Left lung (tissue), 14 donors: ENCODE measurements at regions of chr21 and their contacts with region 1.

Region 1: GRCh38 chr21:33127154-33127893 is 57.4 kb downstream of the OLIG1 start:
- DNase-seq: peak; percentile 61 to 84 (median 74)
- ATAC-seq: peak; percentile 98
- H3K4me3 ChIP-seq: no peak overlapping the region
- H3K27ac ChIP-seq: no peak overlapping the region
- H3K4me1 ChIP-seq: peaks cover 0 to 8% of the 10 kb centered on the region in 2 donors
- H3K27me3 ChIP-seq: peaks cover 0 to 58% of the 10 kb centered on the region in 2 donors
- CTCF ChIP-seq: peak; percentile 60 to 75

Region 2: GRCh38 chr21:32844653-32845436 is 282.5 kb before region 1 on chr21:
- intact Hi-C with region 1: loop called in 1 of 2 experiments (anchors 10 kb)
- DNase-seq: no peak
- ATAC-seq: peak; percentile 62
- H3K4me3 ChIP-seq: no peak overlapping the region
- H3K27ac ChIP-seq: no peak overlapping the region
- H3K4me1 ChIP-seq: no peaks in the 10 kb centered on the region
- H3K27me3 ChIP-seq: peaks cover 5% of the 10 kb centered on the region in 2 donors
- CTCF ChIP-seq: no peak